ENCODE measurements at regions of chr3 and their contacts with region 1.

Region 1: DNA sequence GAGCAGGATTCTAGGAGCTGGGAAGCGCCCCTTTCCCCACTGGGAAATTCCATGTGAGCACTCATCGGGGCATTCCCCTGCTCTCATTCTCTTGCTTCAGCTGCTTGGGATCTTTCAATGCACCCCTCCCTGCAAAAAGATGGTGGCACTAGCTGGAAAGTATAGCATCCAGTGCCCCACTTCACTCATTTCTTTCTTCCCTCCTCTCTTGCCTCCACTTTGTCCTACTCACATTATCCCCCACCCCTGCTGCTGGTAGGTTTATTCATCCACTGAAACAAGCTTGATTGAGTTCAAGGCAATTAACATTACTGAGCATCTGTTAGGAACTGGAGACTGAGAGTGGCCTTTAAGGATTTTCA is 84.8 kb upstream of the LIMD1 start:
- DNase-seq: no peak
- H3K4me3 ChIP-seq: no peak overlapping the region
- H3K27ac ChIP-seq: no peak overlapping the region
- H3K4me1 ChIP-seq: no peaks in the 10 kb centered on the region
- H3K27me3 ChIP-seq: no peaks in the 10 kb centered on the region
- CTCF ChIP-seq: no peak

Region 2: GRCh38 chr3:45224824-45225464 is 284.8 kb before region 1 on chr3:
- intact Hi-C with region 1: no loop called
- DNase-seq: peak; percentile 75
- H3K4me3 ChIP-seq: peak overlapping the region; percentile 37
- H3K27ac ChIP-seq: peak overlapping the region; percentile 3
- H3K4me1 ChIP-seq: peaks cover 4% of the 10 kb centered on the region
- H3K27me3 ChIP-seq: peaks cover 20% of the 10 kb centered on the region
- CTCF ChIP-seq: peak; percentile 19

Region 3: DNA sequence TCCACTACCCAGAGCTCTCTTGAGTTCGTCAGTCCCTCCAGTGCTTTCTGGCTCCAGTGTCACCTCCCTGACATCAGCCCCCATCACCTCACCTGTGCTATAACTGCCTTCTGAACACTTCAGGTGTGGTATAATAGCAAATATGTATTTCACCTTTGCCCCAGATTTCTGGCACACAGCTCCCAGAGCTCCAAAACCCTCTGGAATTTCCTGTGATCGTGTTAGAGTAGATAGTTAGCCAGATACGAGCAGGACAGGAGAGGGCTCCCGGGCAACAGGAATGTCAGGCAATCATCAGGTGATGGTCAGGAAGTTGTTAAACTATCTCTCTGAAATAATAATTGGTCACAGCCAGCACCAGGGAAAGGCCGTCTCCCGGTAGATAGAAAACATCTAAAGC is 62.2 kb after region 1 on chr3:
- intact Hi-C with region 1: no loop called
- DNase-seq: no peak
- H3K4me3 ChIP-seq: no peak overlapping the region
- H3K27ac ChIP-seq: no peak overlapping the region
- H3K4me1 ChIP-seq: no peaks in the 10 kb centered on the region
- H3K27me3 ChIP-seq: no peaks in the 10 kb centered on the region
- CTCF ChIP-seq: no peak

Region 4: DNA sequence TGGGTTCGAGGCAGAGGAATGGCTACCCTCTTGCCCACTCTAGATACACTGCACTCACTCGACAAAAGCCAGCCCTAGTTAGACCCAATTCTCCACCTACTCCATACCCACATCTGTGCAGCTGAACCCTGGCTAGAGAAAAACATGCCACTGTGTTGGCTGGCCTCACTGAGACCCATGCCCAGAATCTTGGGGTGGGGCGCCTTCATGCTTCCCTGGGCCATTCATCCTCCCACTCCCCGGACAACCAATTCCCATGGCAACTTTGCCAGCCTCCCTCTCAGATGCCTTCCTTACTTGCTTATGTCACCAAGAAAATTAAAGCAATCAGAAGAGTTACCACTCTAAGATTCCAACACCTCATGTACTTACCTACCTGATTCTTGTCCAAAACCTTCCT is 75.6 kb after region 1 on chr3:
- intact Hi-C with region 1: loop called (anchors 5 kb)
- DNase-seq: no peak
- H3K4me3 ChIP-seq: no peak overlapping the region
- H3K27ac ChIP-seq: no peak overlapping the region
- H3K4me1 ChIP-seq: no peaks in the 10 kb centered on the region
- H3K27me3 ChIP-seq: no peaks in the 10 kb centered on the region
- CTCF ChIP-seq: no peak